PC-3 (cell line): ENCODE measurements at regions of chr5 and their contacts with region 1.

Region 1: GRCh38 chr5:12772276-12772675 is 868.0 kb upstream of the CTNND2 start:
- DNase-seq: peak; percentile 57
- ATAC-seq: peak; percentile 48; the same call in 1 of the 2 replicates
- H3K4me3 ChIP-seq: no peak overlapping the region
- H3K27ac ChIP-seq: no peak overlapping the region
- H3K4me1 ChIP-seq: peaks cover 13% of the 10 kb centered on the region; the same call in 1 of the 2 replicates
- H3K27me3 ChIP-seq: no peaks in the 10 kb centered on the region
- CTCF ChIP-seq: no peak

Region 2: DNA sequence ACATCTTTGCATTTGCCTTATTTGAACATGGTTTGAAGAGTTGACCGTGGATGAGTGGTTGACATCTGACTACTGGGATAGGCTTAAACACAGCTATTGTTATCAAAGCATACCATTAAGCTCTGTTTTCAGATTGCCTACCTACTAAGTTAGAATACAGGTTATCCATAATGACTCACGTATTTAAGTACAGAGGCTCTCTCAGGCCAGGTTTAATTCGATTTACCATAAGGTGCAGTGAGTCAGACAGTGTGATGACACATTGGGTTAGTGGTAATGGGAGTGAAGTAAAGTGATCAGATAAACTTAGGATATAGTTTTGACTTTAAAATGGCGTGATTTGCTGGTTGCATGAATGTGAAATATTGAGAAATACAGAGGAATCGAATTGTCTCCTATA is 136.1 kb before region 1 on chr5:
- CTCF ChIA-PET with region 1: no interaction called
- POLR2A ChIA-PET with region 1: no interaction called
- intact Hi-C with region 1: loop called (anchors 10 kb)
- DNase-seq: peak; percentile 98
- ATAC-seq: peak; percentile 96
- H3K4me3 ChIP-seq: peak overlapping the region; percentile 38
- H3K27ac ChIP-seq: peak overlapping the region; percentile 60
- H3K4me1 ChIP-seq: peaks cover 15% of the 10 kb centered on the region
- H3K27me3 ChIP-seq: no peaks in the 10 kb centered on the region
- CTCF ChIP-seq: no peak

Region 3: GRCh38 chr5:12805165-12805707 is 33.0 kb after region 1 on chr5:
- CTCF ChIA-PET with region 1: no interaction called
- POLR2A ChIA-PET with region 1: no interaction called
- intact Hi-C with region 1: no loop called
- DNase-seq: no peak
- ATAC-seq: no peak
- H3K4me3 ChIP-seq: no peak overlapping the region
- H3K27ac ChIP-seq: no peak overlapping the region
- H3K4me1 ChIP-seq: no peaks in the 10 kb centered on the region
- H3K27me3 ChIP-seq: no peaks in the 10 kb centered on the region
- CTCF ChIP-seq: no peak